ENCODE measurements at regions of chr20 and their contacts with region 1.

Region 1: GRCh38 chr20:20083807-20084206 is 31.5 kb downstream of the CFAP61 start:
- DNase-seq: peak in 1 of 2 experiments; percentile 23
- H3K4me3 ChIP-seq: no peak overlapping the region
- H3K4me3 Mint-ChIP-seq: no peak overlapping the region
- H3K27ac Mint-ChIP-seq: no peak overlapping the region
- H3K4me1 ChIP-seq: no peaks in the 10 kb centered on the region
- H3K4me1 Mint-ChIP-seq: peaks cover 6% of the 10 kb centered on the region
- H3K27me3 ChIP-seq: no peaks in the 10 kb centered on the region
- H3K27me3 Mint-ChIP-seq: peaks cover 3% of the 10 kb centered on the region
- CTCF ChIP-seq: peak; percentile 37 to 64

Region 2: DNA sequence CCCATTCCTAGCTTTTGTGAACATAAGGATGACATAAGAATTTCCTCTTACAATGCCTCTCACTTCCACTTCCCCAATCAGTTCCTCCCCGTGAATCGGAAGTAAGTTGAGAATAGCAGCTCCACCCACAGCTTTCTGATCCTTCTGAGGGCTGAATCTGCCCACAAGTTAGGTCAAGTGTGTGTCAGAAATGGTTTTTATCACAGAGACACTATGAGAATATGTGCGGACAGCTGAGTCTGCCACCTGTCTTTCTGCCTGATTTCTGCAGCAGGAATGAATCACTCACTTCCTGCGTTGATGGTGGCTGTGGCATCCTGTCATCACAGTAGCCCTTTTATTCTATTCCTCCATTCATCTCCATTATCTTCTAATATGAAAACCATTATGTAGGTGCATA is 255.6 kb before region 1 on chr20:
- CTCF ChIA-PET with region 1: no interaction called
- POLR2A ChIA-PET with region 1: no interaction called
- intact Hi-C with region 1: no loop called
- DNase-seq: no peak
- H3K4me3 ChIP-seq: no peak overlapping the region
- H3K4me3 Mint-ChIP-seq: peak overlapping the region; percentile 25
- H3K27ac Mint-ChIP-seq: peak overlapping the region; percentile 60
- H3K4me1 ChIP-seq: peaks cover 20% of the 10 kb centered on the region
- H3K4me1 Mint-ChIP-seq: peaks cover 13% of the 10 kb centered on the region
- H3K27me3 ChIP-seq: no peaks in the 10 kb centered on the region
- H3K27me3 Mint-ChIP-seq: no peaks in the 10 kb centered on the region
- CTCF ChIP-seq: peak in 1 of 2 experiments; percentile 51

Region 3: DNA sequence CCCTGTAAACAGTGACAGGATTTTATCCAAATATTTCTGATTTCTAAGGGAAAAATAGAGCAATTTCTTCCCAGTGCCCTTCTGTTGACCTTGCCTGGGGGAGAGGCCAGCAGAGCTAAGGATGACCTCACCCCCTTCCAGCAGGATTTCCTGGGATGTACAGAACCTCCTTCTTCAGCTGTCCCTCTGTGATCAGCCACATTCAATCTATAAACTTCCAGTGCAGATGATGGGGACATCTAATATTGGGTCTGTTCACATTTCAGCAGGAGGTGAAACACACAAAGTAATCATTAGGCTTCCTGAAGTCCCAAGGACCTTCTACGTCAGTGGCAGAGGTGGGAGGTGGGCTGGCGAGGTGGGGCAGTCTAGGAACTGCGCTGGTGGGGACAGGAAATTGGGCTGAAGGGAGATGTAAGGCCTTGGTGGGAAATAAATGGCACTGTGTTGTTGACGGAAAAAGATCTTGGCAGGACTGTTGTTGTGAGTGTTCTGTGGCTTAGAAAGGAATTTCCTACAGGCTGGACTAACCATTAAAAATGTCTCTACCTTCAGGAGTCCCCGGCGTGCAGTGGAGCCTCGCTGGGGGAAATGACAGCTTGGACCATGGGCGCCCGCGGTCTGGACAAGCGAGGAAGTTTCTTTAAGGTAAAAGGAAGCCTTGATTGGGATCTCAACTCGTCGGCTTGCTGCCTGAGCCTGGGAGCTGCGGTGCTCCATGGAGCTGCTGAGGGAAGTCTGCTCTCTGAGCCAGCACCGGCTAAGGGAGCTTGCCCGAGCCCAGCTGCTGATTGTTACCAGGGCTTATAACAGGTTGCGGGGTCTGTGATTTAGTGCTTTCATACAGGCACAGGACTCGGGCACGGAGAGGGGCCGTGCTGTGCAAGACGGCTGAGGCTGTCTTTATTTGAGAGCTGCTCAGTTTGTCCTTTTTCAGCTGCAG is 194.5 kb before region 1 on chr20:
- CTCF ChIA-PET with region 1: no interaction called
- POLR2A ChIA-PET with region 1: no interaction called
- intact Hi-C with region 1: no loop called
- DNase-seq: no peak
- H3K4me3 ChIP-seq: no peak overlapping the region
- H3K4me3 Mint-ChIP-seq: no peak overlapping the region
- H3K27ac Mint-ChIP-seq: peak overlapping the region; percentile 40
- H3K4me1 ChIP-seq: peaks cover 47% of the 10 kb centered on the region
- H3K4me1 Mint-ChIP-seq: peaks cover 36% of the 10 kb centered on the region
- H3K27me3 ChIP-seq: no peaks in the 10 kb centered on the region
- H3K27me3 Mint-ChIP-seq: no peaks in the 10 kb centered on the region
- CTCF ChIP-seq: no peak

Region 4: DNA sequence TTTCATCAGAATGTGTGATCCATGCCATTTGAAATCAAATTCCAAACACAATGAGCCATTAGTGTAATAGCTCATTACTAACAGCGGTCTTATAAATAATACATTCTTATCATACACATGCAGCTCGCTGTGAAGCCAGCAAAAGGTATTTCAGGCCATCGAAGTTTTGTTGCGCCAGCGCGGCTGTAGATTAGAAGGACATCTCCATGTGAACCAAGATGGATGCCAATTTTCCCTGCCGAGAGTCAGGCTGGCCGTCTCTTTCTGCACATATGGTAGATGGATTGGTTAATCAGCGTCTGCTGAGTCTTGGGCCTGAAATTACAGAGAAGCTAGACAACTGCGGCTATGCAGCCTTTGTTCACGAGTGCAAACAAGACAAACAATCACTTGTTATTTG is 12.6 kb after region 1 on chr20:
- CTCF ChIA-PET with region 1: no interaction called
- POLR2A ChIA-PET with region 1: no interaction called
- intact Hi-C with region 1: no loop called
- DNase-seq: no peak
- H3K4me3 ChIP-seq: no peak overlapping the region
- H3K4me3 Mint-ChIP-seq: no peak overlapping the region
- H3K27ac Mint-ChIP-seq: no peak overlapping the region
- H3K4me1 ChIP-seq: no peaks in the 10 kb centered on the region
- H3K4me1 Mint-ChIP-seq: no peaks in the 10 kb centered on the region
- H3K27me3 ChIP-seq: no peaks in the 10 kb centered on the region
- H3K27me3 Mint-ChIP-seq: peaks cover 10% of the 10 kb centered on the region
- CTCF ChIP-seq: no peak

Region 5: DNA sequence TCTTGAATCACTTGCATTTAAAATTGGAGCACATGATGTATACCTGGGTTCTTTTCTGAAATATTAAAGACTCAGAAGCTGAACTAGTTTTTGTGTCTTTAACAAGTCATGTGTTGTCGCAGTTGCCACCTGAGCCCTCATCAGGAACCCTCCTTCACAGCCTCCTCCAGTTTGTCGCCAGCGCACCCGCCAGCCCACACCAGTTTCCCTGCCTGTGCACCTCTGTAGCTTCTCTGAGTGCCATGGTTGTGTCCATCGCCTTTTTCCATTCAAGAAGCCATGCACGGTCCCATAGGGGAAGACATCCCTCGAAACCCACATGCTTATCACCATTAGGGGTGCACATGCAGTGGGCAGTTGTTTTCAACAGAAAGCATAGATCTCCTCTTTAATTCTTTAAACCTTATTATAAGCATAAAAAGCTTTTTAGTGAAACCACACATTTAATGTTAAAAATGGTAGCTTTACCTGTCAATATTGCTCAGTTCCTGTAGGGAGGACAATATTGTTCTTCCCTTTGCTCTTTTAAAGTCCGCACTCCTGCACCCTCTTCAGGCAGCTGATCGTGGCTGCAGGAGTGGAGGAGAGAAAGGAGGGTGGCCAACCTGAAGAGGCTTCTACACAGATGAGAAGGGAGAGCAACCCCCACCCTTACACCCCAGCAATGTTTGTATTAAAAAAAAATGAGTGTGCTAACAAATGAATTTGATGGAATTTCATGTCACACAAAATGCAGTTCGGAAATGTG is 90.5 kb after region 1 on chr20:
- CTCF ChIA-PET with region 1: interaction called, 3 read pairs
- POLR2A ChIA-PET with region 1: no interaction called
- intact Hi-C with region 1: loop called (anchors 10 kb)
- DNase-seq: no peak
- H3K4me3 ChIP-seq: no peak overlapping the region
- H3K4me3 Mint-ChIP-seq: no peak overlapping the region
- H3K27ac Mint-ChIP-seq: no peak overlapping the region
- H3K4me1 ChIP-seq: no peaks in the 10 kb centered on the region
- H3K4me1 Mint-ChIP-seq: no peaks in the 10 kb centered on the region
- H3K27me3 ChIP-seq: no peaks in the 10 kb centered on the region
- H3K27me3 Mint-ChIP-seq: peaks cover 18% of the 10 kb centered on the region
- CTCF ChIP-seq: peak in 1 of 2 experiments; percentile 39

Region 6: GRCh38 chr20:20237093-20237959 is 153.5 kb after region 1 on chr20:
- CTCF ChIA-PET with region 1: interaction called, 7 read pairs
- POLR2A ChIA-PET with region 1: no interaction called
- intact Hi-C with region 1: loop called (anchors 1 kb)
- DNase-seq: peak; percentile 47 to 66
- H3K4me3 ChIP-seq: no peak overlapping the region
- H3K4me3 Mint-ChIP-seq: no peak overlapping the region
- H3K27ac Mint-ChIP-seq: no peak overlapping the region
- H3K4me1 ChIP-seq: no peaks in the 10 kb centered on the region
- H3K4me1 Mint-ChIP-seq: no peaks in the 10 kb centered on the region
- H3K27me3 ChIP-seq: peaks cover 1% of the 10 kb centered on the region; the same call in 1 of the 2 replicates
- H3K27me3 Mint-ChIP-seq: peaks cover 9% of the 10 kb centered on the region
- CTCF ChIP-seq: peak; percentile 81 to 83

Region 7: GRCh38 chr20:20568604-20569205 is 484.9 kb after region 1 on chr20:
- CTCF ChIA-PET with region 1: no interaction called
- POLR2A ChIA-PET with region 1: no interaction called
- intact Hi-C with region 1: loop called (anchors 1 kb)
- DNase-seq: peak in 1 of 2 experiments; percentile 43
- H3K4me3 ChIP-seq: no peak overlapping the region
- H3K4me3 Mint-ChIP-seq: no peak overlapping the region
- H3K27ac Mint-ChIP-seq: no peak overlapping the region
- H3K4me1 ChIP-seq: peaks cover 18% of the 10 kb centered on the region
- H3K4me1 Mint-ChIP-seq: no peaks in the 10 kb centered on the region
- H3K27me3 ChIP-seq: no peaks in the 10 kb centered on the region
- H3K27me3 Mint-ChIP-seq: no peaks in the 10 kb centered on the region
- CTCF ChIP-seq: peak; percentile 79 to 80

Region 8: GRCh38 chr20:20593447-20594170 is 509.8 kb after region 1 on chr20:
- CTCF ChIA-PET with region 1: interaction called, 4 read pairs
- POLR2A ChIA-PET with region 1: no interaction called
- intact Hi-C with region 1: loop called (anchors 2 kb)
- DNase-seq: peak; percentile 53 to 61
- H3K4me3 ChIP-seq: no peak overlapping the region
- H3K4me3 Mint-ChIP-seq: no peak overlapping the region
- H3K27ac Mint-ChIP-seq: no peak overlapping the region
- H3K4me1 ChIP-seq: no peaks in the 10 kb centered on the region
- H3K4me1 Mint-ChIP-seq: no peaks in the 10 kb centered on the region
- H3K27me3 ChIP-seq: no peaks in the 10 kb centered on the region
- H3K27me3 Mint-ChIP-seq: no peaks in the 10 kb centered on the region
- CTCF ChIP-seq: peak; percentile 58 to 66

Measured in Caco-2 (cell line).